Motor neuron (in vitro differentiated cells): ENCODE measurements at regions of chr6 and their contacts with region 1.

Region 1: DNA sequence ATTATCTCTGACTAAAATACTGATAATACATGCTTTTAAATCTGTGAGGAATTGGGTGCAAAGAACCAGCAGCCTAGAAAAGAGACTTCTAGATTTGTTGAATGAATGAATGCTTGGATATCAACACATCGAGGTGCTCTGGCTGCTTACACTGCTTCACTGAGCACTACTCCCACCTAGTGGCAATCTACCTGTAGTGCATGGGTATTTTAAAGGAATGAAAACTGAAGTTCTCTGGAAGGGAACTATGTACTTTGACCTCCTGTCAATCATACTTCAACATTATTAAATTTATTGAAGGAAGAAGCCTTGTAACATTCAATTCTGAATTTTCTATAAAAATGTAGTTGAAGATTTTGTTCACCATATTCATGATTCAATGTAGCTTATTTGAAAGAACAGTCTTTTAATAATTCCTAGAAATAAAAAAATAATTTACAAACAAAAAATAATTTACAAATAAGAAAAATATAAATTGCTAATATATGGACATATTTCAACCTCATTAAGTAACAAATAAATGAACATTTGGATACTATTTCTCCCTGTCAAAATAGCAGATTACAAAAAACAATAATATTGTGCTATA is 111.2 kb upstream of the MMS22L start:
- ATAC-seq: peak in 5 of 8 experiments; percentile 22 to 71 (median 45)
- H3K4me3 ChIP-seq: no peak overlapping the region
- H3K27ac ChIP-seq: no peak overlapping the region
- H3K4me1 ChIP-seq: no peaks in the 10 kb centered on the region

Region 2: DNA sequence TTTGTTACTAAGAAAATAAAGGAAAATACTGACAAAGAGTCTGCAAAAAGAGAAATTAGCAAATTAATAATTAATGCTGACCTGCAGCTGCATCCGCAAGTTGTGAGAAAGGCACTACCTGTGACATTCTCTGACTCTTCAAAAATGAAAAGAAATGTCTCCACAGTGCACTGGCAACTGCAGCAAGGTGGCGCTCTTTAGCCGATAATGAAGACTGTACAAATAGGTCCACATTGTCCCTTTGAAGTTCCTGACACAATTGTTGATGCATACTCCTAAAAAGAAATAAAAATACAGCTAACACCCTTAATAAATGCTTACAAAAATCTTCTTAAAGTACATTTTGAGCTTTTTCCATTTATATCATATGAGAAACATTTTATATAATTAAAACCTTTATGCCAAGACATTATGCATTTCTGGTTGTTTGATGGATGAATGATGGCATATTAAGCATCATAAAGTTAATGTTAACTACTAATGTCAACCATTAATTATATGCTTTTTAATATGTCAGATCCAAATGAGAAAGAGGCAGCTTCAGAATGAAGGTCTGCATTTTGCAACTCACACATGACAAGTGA is 207.7 kb before region 1 on chr6:
- in situ Hi-C with region 1: loop called in 4 of 9 experiments (anchors 10 to 25 kb)
- ATAC-seq: peak; percentile 63 to 81 (median 75)
- H3K4me3 ChIP-seq: no peak overlapping the region
- H3K27ac ChIP-seq: no peak overlapping the region
- H3K4me1 ChIP-seq: no peaks in the 10 kb centered on the region

Region 3: DNA sequence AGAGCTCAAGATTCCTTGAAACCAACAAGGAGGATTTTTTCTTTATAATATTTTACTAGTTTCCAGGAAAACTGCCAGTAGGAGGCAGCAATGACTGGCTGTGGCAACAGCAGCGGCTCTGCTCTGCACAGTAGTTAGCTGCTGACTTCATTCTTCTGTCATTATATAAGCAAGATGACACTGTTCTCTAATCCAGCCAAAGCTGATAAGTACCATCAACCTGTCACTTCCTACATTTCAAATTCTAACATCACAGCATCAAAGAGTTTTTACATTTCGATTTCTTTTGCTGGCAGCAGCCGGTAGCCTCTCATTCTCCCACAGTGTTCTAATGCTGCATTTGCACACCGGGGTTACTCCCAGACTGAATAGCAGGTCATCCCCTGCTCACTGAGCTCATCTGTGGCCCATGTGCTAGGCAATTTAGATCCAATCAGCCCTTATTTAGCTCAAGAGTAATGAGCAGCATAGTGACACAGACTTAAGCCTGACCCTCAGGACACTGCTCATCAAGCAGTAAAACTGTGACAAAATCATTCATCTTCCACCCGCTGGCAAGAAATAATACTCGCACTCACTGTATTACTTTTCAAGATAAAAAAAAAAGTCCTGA is 179.0 kb before region 1 on chr6:
- in situ Hi-C with region 1: loop called in 1 of 9 experiments (anchors 25 kb)
- ATAC-seq: peak; percentile 96 to 99 (median 98)
- H3K4me3 ChIP-seq: peak overlapping the region in 4 of 5 donors; percentile 5 to 28 (median 12)
- H3K27ac ChIP-seq: peak overlapping the region in 1 of 2 donors; percentile 44
- H3K4me1 ChIP-seq: peaks cover 3 to 10% of the 10 kb centered on the region in 2 donors

Region 4: GRCh38 chr6:97508646-97509045 is 114.4 kb after region 1 on chr6:
- in situ Hi-C with region 1: no loop called
- ATAC-seq: peak in 2 of 8 experiments; percentile 53 to 64
- H3K4me3 ChIP-seq: no peak overlapping the region
- H3K27ac ChIP-seq: no peak overlapping the region
- H3K4me1 ChIP-seq: no peaks in the 10 kb centered on the region